ENCODE measurements at regions of chr10 and their contacts with region 1.

Region 1: GRCh38 chr10:97498076-97498840 is at the start of gene MMS19:
- DNase-seq: peak; percentile 99
- H3K4me3 Mint-ChIP-seq: peak within 1 kb of the TSS; percentile 99
- H3K27ac Mint-ChIP-seq: peak within 1 kb of the TSS; percentile 99
- H3K4me1 Mint-ChIP-seq: peaks cover 47% of the 10 kb centered on the region
- H3K27me3 Mint-ChIP-seq: peaks cover 34% of the 10 kb centered on the region
- total RNA-seq, gene MMS19: 91.8 and 93.2 TPM in 2 replicates

Region 2: GRCh38 chr10:97334370-97335175 is 163.7 kb before region 1 on chr10 and contains the start of gene FRAT2:
- intact Hi-C with region 1: loop called (anchors 1 kb)
- DNase-seq: peak; percentile 83
- H3K4me3 Mint-ChIP-seq: peak within 1 kb of the TSS; percentile 86
- H3K27ac Mint-ChIP-seq: peak within 1 kb of the TSS; percentile 75
- H3K4me1 Mint-ChIP-seq: peaks cover 34% of the 10 kb centered on the region
- H3K27me3 Mint-ChIP-seq: peaks cover 24% of the 10 kb centered on the region
- total RNA-seq, gene FRAT2: 10.8 and 11.2 TPM in 2 replicates

Region 3: GRCh38 chr10:97425964-97426775 is 72.1 kb before region 1 on chr10 and contains the start of gene PGAM1:
- intact Hi-C with region 1: loop called (anchors 1 kb)
- DNase-seq: peak; percentile 98
- H3K4me3 Mint-ChIP-seq: peak within 1 kb of the TSS; percentile 94
- H3K27ac Mint-ChIP-seq: peak within 1 kb of the TSS; percentile 99
- H3K4me1 Mint-ChIP-seq: peaks cover 46% of the 10 kb centered on the region
- H3K27me3 Mint-ChIP-seq: peaks cover 2% of the 10 kb centered on the region
- total RNA-seq, gene PGAM1: 967 and 979 TPM in 2 replicates

Region 4: GRCh38 chr10:97553575-97554031 is 55.3 kb after region 1 on chr10:
- intact Hi-C with region 1: loop called (anchors 1 kb)
- DNase-seq: peak; percentile 52
- H3K4me3 Mint-ChIP-seq: no peak overlapping the region
- H3K27ac Mint-ChIP-seq: no peak overlapping the region
- H3K4me1 Mint-ChIP-seq: no peaks in the 10 kb centered on the region
- H3K27me3 Mint-ChIP-seq: peaks cover 4% of the 10 kb centered on the region

Region 5: GRCh38 chr10:97648562-97649404 is 150.5 kb after region 1 on chr10:
- intact Hi-C with region 1: loop called (anchors 2 kb)
- DNase-seq: peak; percentile 24
- H3K4me3 Mint-ChIP-seq: peak overlapping the region; percentile 39
- H3K27ac Mint-ChIP-seq: peak overlapping the region; percentile 45
- H3K4me1 Mint-ChIP-seq: peaks cover 18% of the 10 kb centered on the region
- H3K27me3 Mint-ChIP-seq: no peaks in the 10 kb centered on the region

Region 6: DNA sequence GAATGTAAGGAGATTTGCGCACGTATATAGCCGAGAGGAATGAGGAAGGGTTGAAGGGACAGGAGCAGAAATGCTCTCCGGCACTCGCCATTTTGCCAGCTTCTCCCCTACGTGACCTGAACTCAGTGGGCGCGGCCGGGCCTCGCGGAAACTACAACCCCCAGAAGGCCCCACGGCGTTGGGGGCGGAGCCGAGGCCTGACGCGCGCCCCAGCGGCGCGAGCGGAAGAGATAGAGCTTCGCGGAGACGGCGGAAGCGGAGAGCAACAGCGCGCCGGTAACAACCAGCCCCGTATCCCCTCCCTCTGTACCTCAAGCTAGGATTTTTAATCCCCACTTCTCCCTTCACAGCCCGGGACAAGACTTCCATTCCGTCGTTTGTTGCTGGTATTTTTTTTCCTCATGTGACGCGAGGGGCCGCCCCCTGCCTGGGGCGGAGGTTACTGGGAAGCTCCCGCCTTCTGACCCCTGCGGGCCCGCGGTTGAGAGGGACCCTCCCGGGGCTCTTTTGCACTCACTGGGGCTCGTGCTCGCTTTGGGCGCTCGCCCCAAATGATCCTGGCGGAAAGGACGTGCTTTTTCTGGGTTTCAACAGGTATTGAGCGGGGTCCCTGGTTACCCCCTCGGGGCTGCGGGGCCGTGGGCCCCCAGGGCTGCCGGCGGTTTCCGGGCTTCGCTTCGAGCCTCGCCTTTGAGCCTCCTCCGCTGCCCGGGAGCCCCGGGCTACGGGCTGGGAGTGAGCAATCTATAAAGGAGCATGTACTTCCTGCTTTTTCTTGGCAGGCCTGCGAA is 636.4 kb after region 1 on chr10 and contains the start of gene R3HCC1L:
- intact Hi-C with region 1: loop called (anchors 2 kb)
- DNase-seq: peak; percentile 93
- H3K4me3 Mint-ChIP-seq: peak within 1 kb of the TSS; percentile 95
- H3K27ac Mint-ChIP-seq: peak within 1 kb of the TSS; percentile 89
- H3K4me1 Mint-ChIP-seq: peaks cover 44% of the 10 kb centered on the region
- H3K27me3 Mint-ChIP-seq: no peaks in the 10 kb centered on the region
- total RNA-seq, gene R3HCC1L: 20.0 and 20.1 TPM in 2 replicates

Measured in activated T-helper 1 cell treated with anti-CD3 and anti-CD28 coated beads, Interleukin-12 subunit alpha, Interleukin-12 subunit beta, Interleukin-2, Interleukin-4 antibody, amounts not matched to agents 30 ng/mL and 10 ng/mL and 1 ng/mL, durations not matched to agents 14 hours and 24 hours and 36 hours (primary cell).